A673 (cell line): ENCODE measurements at regions of chr12 and their contacts with region 1.

Region 1: GRCh38 chr12:127712561-127712960 is 554.4 kb upstream of the TMEM132C start:
- DNase-seq: no peak
- H3K4me3 ChIP-seq: no peak overlapping the region
- H3K27ac ChIP-seq: no peak overlapping the region
- H3K4me1 ChIP-seq: no peaks in the 10 kb centered on the region
- H3K27me3 ChIP-seq: no peaks in the 10 kb centered on the region
- CTCF ChIP-seq: no peak

Region 2: DNA sequence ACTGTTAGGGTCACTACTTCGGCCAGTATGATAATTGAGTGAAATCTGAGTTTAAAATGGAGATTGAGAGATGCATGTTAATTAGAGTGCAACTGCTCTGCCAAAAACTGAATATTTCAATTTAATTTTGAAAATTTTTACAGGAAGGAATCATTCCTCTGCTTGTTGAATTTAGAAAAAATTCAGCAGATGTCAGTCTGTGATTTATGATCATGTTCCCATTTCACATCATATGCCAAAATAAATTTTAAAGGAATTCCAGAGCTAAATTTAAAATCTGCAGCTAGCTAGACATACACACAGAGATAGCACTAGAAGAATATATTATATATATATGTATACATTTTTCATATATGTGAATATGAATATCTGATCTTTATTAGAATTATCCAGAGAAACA is 243.2 kb before region 1 on chr12:
- CTCF ChIA-PET with region 1: no interaction called
- POLR2A ChIA-PET with region 1: no interaction called
- intact Hi-C with region 1: no loop called
- DNase-seq: no peak
- H3K4me3 ChIP-seq: no peak overlapping the region
- H3K27ac ChIP-seq: no peak overlapping the region
- H3K4me1 ChIP-seq: no peaks in the 10 kb centered on the region
- H3K27me3 ChIP-seq: peaks cover 44% of the 10 kb centered on the region
- CTCF ChIP-seq: no peak

Region 3: GRCh38 chr12:127742231-127742630 is 29.7 kb after region 1 on chr12:
- CTCF ChIA-PET with region 1: no interaction called
- POLR2A ChIA-PET with region 1: interaction called, 12 read pairs
- intact Hi-C with region 1: no loop called
- DNase-seq: no peak
- H3K4me3 ChIP-seq: no peak overlapping the region
- H3K27ac ChIP-seq: no peak overlapping the region
- H3K4me1 ChIP-seq: no peaks in the 10 kb centered on the region
- H3K27me3 ChIP-seq: no peaks in the 10 kb centered on the region
- CTCF ChIP-seq: no peak